Caco-2 (cell line): ENCODE measurements at regions of chr5 and their contacts with region 1.

Region 1: DNA sequence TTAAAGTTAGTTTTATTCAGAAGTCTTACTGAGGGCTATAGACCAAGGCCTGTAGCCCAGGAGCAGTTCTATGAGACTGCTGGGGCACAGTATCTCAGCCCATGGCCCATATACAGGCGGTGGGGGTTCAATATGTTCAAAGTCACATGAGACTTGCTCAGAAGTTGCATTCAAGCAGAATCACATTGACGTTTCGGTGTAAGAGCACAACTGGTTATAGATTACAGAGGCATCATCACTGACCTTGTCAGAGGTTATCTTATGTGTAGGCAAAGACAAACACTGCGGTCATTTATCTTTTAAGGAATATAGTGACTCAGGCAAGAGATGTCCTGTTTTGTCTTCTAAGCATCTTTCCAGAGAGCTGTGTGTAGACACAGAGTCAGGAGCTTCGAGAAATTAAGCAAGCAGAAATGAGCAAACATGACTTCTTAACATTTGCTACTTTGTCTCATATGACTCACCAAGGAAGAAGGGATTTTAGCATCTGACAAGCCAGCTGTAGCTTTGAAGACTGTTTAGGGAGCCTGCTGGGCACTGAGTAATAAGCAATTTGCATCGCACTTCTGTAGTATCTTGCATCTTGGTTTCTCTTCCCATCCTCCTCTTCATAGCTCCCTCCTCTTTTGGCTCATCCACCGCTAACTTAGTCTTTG is 12.9 kb upstream of the F2RL1 start:
- DNase-seq: peak; percentile 76 to 77
- H3K4me3 ChIP-seq: peak overlapping the region; percentile 3; the same call in 1 of the 2 replicates
- H3K4me3 Mint-ChIP-seq: peak overlapping the region; percentile 47
- H3K27ac Mint-ChIP-seq: peak overlapping the region; percentile 80
- H3K4me1 ChIP-seq: peaks cover 58% of the 10 kb centered on the region
- H3K4me1 Mint-ChIP-seq: peaks cover 26% of the 10 kb centered on the region
- H3K27me3 ChIP-seq: no peaks in the 10 kb centered on the region
- H3K27me3 Mint-ChIP-seq: no peaks in the 10 kb centered on the region
- CTCF ChIP-seq: no peak

Region 2: DNA sequence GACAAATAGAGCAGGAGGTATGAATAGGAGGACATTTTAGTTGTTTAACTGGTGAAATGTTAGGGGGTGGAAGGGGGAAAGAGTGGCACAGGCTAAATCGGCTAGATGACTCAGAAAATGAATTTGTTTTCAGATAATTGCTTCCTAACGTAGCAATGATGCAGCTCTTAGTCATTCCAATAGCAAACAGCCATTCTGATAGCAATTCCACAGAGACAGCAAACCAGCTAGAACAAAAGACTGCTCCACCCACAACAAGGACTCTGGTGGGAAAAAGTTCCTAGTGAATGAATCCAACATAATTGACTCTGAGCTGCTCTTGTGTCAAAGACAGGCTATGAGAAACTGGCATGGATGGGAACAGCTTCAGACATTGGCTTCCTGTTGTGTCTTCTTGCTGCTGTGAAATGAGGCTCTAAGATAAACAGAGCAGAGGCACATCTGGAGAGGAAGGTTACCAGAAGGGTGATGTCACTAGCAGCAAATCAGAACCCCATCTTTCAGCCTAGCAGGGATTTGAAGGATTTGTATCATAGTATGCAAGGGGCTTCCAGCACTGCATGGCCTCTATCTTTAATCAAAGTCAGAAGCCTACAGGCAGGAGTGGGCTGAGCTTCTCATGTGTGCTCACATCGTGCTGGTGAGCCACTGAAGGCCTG is 15.2 kb before region 1 on chr5:
- CTCF ChIA-PET with region 1: no interaction called
- POLR2A ChIA-PET with region 1: no interaction called
- intact Hi-C with region 1: loop called (anchors 1 kb)
- DNase-seq: peak in 1 of 2 experiments; percentile 20
- H3K4me3 ChIP-seq: no peak overlapping the region
- H3K4me3 Mint-ChIP-seq: no peak overlapping the region
- H3K27ac Mint-ChIP-seq: peak overlapping the region; percentile 53
- H3K4me1 ChIP-seq: peaks cover 39% of the 10 kb centered on the region
- H3K4me1 Mint-ChIP-seq: peaks cover 35% of the 10 kb centered on the region
- H3K27me3 ChIP-seq: no peaks in the 10 kb centered on the region
- H3K27me3 Mint-ChIP-seq: no peaks in the 10 kb centered on the region
- CTCF ChIP-seq: no peak

Region 3: DNA sequence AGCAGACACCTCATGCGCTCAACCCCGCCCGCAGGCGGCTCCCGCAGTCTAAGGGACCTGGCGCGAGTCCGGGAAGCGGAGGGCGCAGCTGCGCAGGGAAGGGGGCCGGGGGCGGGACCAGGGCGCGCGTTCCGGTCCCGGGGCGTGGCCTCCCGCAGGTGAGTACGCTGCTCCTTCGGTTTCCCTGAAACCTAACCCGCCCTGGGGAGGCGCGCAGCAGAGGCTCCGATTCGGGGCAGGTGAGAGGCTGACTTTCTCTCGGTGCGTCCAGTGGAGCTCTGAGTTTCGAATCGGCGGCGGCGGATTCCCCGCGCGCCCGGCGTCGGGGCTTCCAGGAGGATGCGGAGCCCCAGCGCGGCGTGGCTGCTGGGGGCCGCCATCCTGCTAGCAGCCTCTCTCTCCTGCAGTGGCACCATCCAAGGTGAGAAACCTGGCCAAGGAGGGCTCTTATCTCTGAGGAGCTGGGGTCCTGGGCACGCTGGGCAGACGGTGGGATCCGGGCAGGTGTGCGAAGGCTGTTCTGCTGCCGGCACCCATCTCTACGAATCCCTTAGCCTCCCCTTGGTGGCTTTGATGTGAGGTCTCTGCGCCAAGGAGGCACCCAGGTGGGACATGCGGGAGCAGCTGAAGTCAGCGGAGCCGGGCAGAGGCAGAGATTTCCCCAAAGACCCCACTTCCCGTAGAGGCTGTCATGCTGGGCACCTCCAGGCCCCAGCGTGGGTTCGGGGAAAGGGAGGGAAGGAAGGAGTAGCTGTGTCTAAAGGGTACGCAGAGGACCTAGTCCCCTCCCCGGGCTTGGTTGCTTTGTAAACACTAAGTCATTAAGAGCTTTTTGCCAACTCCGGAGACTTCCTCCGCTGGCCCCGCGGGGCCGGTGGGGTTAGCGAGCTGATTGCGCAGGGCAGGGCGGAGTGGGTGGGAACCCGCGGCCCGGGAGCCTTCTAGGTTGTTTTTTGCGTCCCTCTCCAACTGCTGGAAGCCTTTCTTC is 13.2 kb after region 1 on chr5 and contains the start of gene F2RL1:
- CTCF ChIA-PET with region 1: interaction called, 10 read pairs
- POLR2A ChIA-PET with region 1: interaction called, 35 read pairs
- intact Hi-C with region 1: loop called (anchors 1 kb)
- DNase-seq: peak; percentile 96 to 98
- H3K4me3 ChIP-seq: peak within 1 kb of the TSS; percentile 96
- H3K4me3 Mint-ChIP-seq: peak within 1 kb of the TSS; percentile 89
- H3K27ac Mint-ChIP-seq: peak within 1 kb of the TSS; percentile 95
- H3K4me1 ChIP-seq: peaks cover 40% of the 10 kb centered on the region
- H3K4me1 Mint-ChIP-seq: peaks cover 25% of the 10 kb centered on the region
- H3K27me3 ChIP-seq: no peaks in the 10 kb centered on the region
- H3K27me3 Mint-ChIP-seq: no peaks in the 10 kb centered on the region
- CTCF ChIP-seq: no peak
- total RNA-seq, gene F2RL1: 50.0 and 51.8 TPM in 2 replicates

Region 4: DNA sequence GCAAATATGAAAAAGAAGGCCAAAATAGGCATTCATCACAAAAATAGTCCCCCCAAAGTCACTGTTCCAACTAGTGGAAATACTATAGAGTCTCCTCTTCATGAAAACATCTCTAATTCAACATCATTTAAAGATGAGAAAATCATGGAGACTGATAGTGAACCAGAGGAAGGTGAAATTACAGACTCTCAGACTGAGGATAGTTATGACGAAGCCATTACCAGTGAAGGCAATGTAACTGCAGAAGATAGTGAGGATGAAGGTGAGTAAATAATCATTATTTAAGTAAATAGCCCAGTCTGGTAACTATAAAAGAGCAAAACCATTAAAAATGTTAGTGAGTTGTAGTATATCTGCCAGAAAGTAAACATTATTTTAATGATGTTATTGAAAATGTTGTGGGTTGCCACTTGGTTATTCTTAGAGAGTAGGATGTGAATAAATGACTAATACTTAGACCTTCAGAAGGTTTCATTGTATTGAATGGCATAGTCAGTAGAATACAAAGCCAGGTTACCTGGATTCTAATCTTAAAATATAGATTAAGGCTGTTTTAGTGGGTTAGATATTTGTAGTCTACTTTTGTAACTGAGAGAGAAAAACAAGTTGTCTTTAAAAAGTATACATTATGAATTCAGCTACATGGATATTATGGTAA is 240.6 kb after region 1 on chr5:
- CTCF ChIA-PET with region 1: no interaction called
- POLR2A ChIA-PET with region 1: no interaction called
- intact Hi-C with region 1: no loop called
- DNase-seq: no peak
- H3K4me3 ChIP-seq: no peak overlapping the region
- H3K4me3 Mint-ChIP-seq: no peak overlapping the region
- H3K27ac Mint-ChIP-seq: no peak overlapping the region
- H3K4me1 ChIP-seq: no peaks in the 10 kb centered on the region
- H3K4me1 Mint-ChIP-seq: no peaks in the 10 kb centered on the region
- H3K27me3 ChIP-seq: no peaks in the 10 kb centered on the region
- H3K27me3 Mint-ChIP-seq: no peaks in the 10 kb centered on the region
- CTCF ChIP-seq: no peak